Ascending aorta (tissue), 2 donors: ENCODE measurements at regions of chr19 and their contacts with region 1.

Region 1: GRCh38 chr19:3429581-3430080 is 50.7 kb downstream of the SMIM24 start:
- DNase-seq: peak; percentile 94 to 98
- H3K4me3 ChIP-seq: no peak overlapping the region
- H3K27ac ChIP-seq: peak overlapping the region; percentile 87 to 91
- H3K4me1 ChIP-seq: peaks cover 18 to 31% of the 10 kb centered on the region in 2 donors
- H3K27me3 ChIP-seq: no peaks in the 10 kb centered on the region
- CTCF ChIP-seq: peak; percentile 99 to 100 (median 99)

Region 2: DNA sequence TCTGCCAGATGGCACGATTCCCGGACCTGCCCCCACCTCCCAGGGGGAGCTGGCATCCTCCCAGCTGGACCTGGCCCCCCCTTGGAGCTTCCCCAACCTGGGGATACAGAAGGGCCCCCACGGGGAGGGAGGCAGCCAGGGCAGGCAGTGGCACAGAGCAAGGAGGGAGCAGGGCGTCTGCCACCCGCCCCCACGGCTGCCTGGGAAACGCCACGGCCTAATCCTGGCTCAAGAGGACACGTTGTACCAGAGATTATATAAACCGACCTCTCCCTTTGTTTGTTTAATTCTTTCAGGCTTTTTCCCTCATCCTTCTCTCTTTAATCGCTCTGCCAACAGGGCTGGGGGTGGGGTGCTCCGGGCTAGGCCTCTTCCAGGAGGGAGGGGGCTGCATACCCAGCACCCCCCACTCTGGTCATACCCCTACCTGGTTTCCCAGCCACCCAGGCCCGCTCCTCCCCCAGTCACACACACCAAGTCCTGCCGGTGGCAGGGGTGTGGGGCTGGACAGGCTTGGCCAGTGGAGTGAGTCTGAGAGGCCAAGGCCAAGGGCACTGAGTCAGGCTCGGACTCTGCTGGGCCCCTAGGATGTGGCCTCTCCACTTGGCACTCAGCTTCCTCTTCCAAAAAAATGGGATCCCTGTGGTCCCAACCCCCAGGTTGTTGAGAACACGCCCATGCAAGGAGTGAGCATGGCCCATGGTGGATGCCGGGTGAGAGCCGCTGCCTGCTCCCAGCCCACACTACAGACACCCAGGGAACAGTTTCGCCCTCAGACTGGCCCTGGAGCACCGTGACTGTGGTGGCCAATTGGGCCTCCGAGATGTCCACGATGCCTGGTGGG is 92.7 kb before region 1 on chr19:
- intact Hi-C with region 1: loop called (anchors 2 kb)
- DNase-seq: peak; percentile 76 to 97
- H3K4me3 ChIP-seq: no peak overlapping the region
- H3K27ac ChIP-seq: peak overlapping the region; percentile 93 to 98
- H3K4me1 ChIP-seq: peaks cover 22 to 50% of the 10 kb centered on the region in 2 donors
- H3K27me3 ChIP-seq: no peaks in the 10 kb centered on the region
- CTCF ChIP-seq: peak in 1 of 3 experiments; percentile 0

Region 3: GRCh38 chr19:3375221-3376090 is 54.2 kb before region 1 on chr19:
- intact Hi-C with region 1: loop called (anchors 2 kb)
- DNase-seq: peak; percentile 78 to 96
- H3K4me3 ChIP-seq: peak overlapping the region; percentile 9 to 47
- H3K27ac ChIP-seq: peak overlapping the region; percentile 93 to 96
- H3K4me1 ChIP-seq: peaks cover 20 to 42% of the 10 kb centered on the region in 2 donors
- H3K27me3 ChIP-seq: no peaks in the 10 kb centered on the region
- CTCF ChIP-seq: no peak

Region 4: GRCh38 chr19:3450796-3451411 is 21.3 kb after region 1 on chr19:
- intact Hi-C with region 1: loop called (anchors 1 kb)
- DNase-seq: peak; percentile 91 to 98
- H3K4me3 ChIP-seq: no peak overlapping the region
- H3K27ac ChIP-seq: peak overlapping the region; percentile 96 to 99
- H3K4me1 ChIP-seq: peaks cover 0 to 20% of the 10 kb centered on the region in 2 donors
- H3K27me3 ChIP-seq: no peaks in the 10 kb centered on the region
- CTCF ChIP-seq: no peak